ENCODE measurements at regions of chr18 and their contacts with region 1.

Region 1: DNA sequence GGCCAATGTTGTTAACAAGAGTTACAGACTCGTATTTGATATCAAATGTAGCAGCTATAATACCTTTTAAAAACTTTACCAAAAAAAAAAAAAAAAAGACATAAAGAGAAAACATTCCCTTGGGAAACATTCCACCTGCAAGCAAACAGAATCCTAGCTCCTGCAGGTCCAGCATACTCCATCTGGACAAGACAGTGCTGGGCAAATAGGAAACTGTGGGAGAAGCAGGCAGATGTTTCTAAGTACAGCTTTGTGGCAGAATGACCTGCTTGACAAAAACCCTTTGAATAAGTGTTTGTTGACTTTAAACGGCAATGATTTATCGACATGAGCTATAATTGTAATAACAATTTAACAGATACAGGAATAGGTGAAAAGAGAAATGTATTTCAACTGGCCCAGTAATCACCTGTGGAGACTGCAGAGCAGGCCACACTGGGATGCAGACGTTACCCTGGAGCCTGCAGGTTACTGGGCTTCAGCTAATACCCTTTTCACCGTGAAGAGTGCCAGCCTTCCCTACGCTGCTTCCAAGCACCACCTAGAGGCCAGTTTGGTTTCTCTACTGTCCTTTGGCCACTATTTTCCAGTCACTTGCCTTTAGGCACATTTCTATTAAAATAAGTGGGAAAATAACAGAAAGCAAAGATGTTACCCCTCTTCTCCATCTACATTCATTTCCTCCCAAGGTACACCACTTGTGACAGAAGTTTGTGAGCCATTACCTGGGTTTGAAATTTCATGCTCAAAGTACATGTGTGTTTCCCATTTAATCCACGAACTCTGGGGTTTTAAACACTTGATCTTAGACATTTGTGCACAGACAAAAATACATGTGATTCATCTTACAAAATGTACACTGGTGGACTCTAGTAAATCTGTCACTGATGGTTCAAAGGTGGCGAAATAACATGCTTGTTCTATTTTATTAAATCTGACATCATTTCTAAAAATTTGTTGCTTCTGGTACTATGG is 96.9 kb upstream of the ZNF397 start:
- DNase-seq: peak in 8 of 10 donors; percentile 41 to 77 (median 59)
- H3K4me3 ChIP-seq: peak overlapping the region in 2 of 59 donors; percentile 3 to 5
- H3K27ac ChIP-seq: peak overlapping the region in 47 of 59 donors; percentile 4 to 75 (median 53)
- H3K27me3 ChIP-seq: no peaks in the 10 kb centered on the region
- CTCF ChIP-seq: peak; percentile 27 to 94 (median 80)

Region 2: DNA sequence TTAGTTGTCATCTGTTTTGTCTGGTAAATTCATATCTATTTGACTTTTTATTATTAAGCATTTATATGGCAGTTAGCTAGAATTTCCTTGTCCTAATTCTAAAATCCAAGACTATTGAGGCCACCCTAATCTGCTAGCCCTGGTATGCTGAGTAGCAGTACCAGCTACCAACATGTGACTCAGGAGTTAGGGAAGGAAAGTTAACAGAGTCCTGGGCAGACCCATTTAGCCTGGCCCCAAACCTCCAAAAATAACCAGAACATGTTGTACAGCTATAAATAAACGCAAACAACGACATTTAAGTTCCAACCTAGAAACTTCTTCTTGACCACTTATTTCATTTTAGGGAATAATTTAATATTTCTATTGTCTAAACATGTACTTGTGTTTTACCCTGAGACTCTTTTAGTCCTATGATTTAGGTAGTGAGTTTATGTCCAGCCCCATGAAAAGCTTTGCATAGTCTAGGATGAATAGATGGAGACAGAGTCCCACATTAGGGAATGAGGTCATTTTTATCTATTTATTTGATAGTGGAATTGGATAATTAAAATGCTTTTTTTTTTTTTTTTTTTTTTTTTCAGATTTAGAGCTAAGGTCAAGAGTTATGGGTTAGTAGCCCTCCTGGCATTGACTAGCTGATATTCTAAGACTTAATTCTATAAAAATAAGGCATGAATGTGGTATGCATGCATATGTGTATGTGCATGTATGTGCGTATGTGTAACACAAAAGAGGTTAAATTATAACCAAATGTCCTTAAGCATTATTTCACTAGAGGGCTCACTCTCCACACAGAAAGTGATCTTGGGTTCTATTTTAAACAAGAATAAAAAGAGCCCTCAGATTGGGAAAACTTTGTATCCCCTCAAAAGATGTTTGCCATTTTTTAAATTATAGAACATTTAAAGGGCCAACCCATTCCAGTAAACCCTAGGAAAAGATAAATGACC is 262.8 kb before region 1 on chr18:
- intact Hi-C with region 1: loop called in 1 of 2 experiments (anchors 5 kb)
- DNase-seq: no peak
- H3K4me3 ChIP-seq: no peak overlapping the region
- H3K27ac ChIP-seq: peak overlapping the region in 44 of 59 donors; percentile 1 to 76 (median 34)
- H3K27me3 ChIP-seq: no peaks in the 10 kb centered on the region
- CTCF ChIP-seq: peak in 55 of 56 donors; percentile 27 to 76 (median 55)

Region 3: DNA sequence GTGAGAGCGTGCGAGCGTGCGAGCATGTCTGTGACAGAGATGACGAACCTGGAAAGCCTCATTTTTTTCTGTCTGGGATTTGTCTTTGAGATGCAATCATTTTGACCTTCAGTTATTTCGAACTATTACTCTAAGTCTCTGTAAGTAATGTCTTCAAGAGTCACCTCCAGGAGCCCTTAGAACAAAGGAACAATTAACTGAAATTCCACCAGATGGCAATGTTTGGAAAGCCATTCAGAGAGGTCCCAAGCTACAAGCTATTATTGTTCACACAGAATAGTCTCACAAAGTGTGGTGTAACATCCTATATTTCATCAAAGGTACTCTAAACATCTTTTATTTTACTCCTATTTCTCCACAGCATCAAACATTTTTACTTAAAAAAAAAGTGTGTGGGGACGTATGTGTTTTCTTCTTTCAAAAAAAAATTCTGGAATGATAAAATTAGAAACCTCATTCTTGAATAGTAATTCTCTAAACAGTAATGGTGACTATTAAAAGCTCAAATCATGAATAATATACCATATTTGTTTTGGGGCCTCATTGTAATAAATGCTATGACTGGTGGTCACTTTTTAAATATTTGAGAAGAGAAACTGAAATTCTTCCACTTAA is 137.8 kb before region 1 on chr18:
- intact Hi-C with region 1: loop called (anchors 5 to 10 kb)
- DNase-seq: peak in 1 of 10 donors; percentile 5
- H3K4me3 ChIP-seq: peak overlapping the region in 6 of 59 donors; percentile 0 to 22 (median 8)
- H3K27ac ChIP-seq: peak overlapping the region in 34 of 59 donors; percentile 3 to 97 (median 38)
- H3K27me3 ChIP-seq: no peaks in the 10 kb centered on the region
- CTCF ChIP-seq: peak; percentile 59 to 95 (median 80)

Region 4: DNA sequence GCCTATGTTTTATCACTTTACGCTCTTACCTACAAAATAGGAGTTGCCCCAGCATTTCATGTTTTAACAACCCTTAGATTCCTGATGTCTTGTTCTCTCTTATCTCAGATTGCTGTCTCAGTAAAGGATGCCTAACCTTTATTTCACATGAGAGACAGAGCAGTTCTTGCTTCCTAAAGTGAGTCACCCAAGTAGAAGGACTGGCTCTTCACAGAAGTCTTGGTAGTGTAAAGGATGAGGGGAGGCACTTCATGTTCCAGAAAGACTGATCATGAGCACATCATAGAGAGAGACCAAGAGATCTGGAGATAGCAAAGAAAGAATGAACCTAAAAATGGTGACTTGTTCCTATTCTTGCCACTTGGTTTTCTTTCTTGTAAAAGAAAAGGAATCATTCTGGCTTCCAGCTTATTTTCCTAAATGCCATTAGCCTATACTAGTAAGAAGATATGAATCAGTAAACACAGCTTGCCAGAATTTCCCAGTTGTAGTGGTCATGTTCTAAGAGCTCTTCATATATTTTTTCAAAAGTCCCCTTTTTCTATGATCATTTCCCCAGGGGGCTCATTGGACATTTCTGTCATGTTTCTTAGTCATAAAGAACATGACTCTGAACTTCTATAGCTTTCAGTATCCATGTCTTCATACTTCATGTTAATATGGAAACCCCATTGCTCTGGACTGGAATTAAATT is 47.8 kb before region 1 on chr18:
- intact Hi-C with region 1: no loop called
- DNase-seq: no peak
- H3K4me3 ChIP-seq: no peak overlapping the region
- H3K27ac ChIP-seq: peak overlapping the region in 49 of 59 donors; percentile 0 to 83 (median 46)
- H3K27me3 ChIP-seq: no peaks in the 10 kb centered on the region
- CTCF ChIP-seq: no peak

Measured in dorsolateral prefrontal cortex (tissue), 120 donors.